Natural killer cell (primary cell): ENCODE measurements at regions of chr1 and their contacts with region 1.

Region 1: GRCh38 chr1:1231400-1232223 is at the start of gene SDF4:
- DNase-seq: peak; percentile 96 to 98
- ATAC-seq: peak; percentile 91 to 97 (median 94)
- H3K4me3 ChIP-seq: peak within 1 kb of the TSS; percentile 89
- H3K4me3 Mint-ChIP-seq: peak within 1 kb of the TSS; percentile 95
- H3K27ac ChIP-seq: peak within 1 kb of the TSS; percentile 76
- H3K27ac Mint-ChIP-seq: peak within 1 kb of the TSS; percentile 82 to 88
- H3K4me1 ChIP-seq: peaks cover 46% of the 10 kb centered on the region
- H3K4me1 Mint-ChIP-seq: peaks cover 28 to 29% of the 10 kb centered on the region in 2 donors
- H3K27me3 ChIP-seq: no peaks in the 10 kb centered on the region
- H3K27me3 Mint-ChIP-seq: no peaks in the 10 kb centered on the region
- CTCF ChIP-seq: no peak
- total RNA-seq, gene SDF4: 176 to 211 (median 184) TPM

Region 2: GRCh38 chr1:1213345-1214265 is 18.0 kb before region 1 on chr1 and contains the start of gene TNFRSF4:
- intact Hi-C with region 1: loop called (anchors 2 kb)
- DNase-seq: peak; percentile 64 to 70
- ATAC-seq: peak; percentile 14 to 35 (median 28)
- H3K4me3 ChIP-seq: peak within 1 kb of the TSS; percentile 30
- H3K4me3 Mint-ChIP-seq: peak within 1 kb of the TSS; percentile 71
- H3K27ac ChIP-seq: peak within 1 kb of the TSS; percentile 90
- H3K27ac Mint-ChIP-seq: peak within 1 kb of the TSS; percentile 98 to 99
- H3K4me1 ChIP-seq: peaks cover 99% of the 10 kb centered on the region
- H3K4me1 Mint-ChIP-seq: peaks cover 15 to 49% of the 10 kb centered on the region in 2 donors
- H3K27me3 ChIP-seq: no peaks in the 10 kb centered on the region
- H3K27me3 Mint-ChIP-seq: no peaks in the 10 kb centered on the region
- CTCF ChIP-seq: no peak
- total RNA-seq, gene TNFRSF4: 14.3 to 26.5 (median 15.7) TPM